A549 (cell line): ENCODE measurements at regions of chr19 and their contacts with region 1.

Region 1: GRCh38 chr19:53879140-53880081 is 2.6 kb upstream of the PRKCG start:
- DNase-seq: peak; percentile 92 to 93
- ATAC-seq: peak; percentile 64 to 78
- H3K4me3 ChIP-seq: peak overlapping the region; percentile 44
- H3K27ac ChIP-seq: peak overlapping the region; percentile 72 to 89
- H3K4me1 ChIP-seq: peaks cover 21% of the 10 kb centered on the region
- CTCF ChIP-seq: no peak
- EP300 ChIP-seq: no peak
- POLR2A ChIP-seq: no peak
- RAD21 ChIP-seq: no peak

Region 2: GRCh38 chr19:53849237-53849676 is 30.2 kb before region 1 on chr19:
- CTCF ChIA-PET with region 1: interaction called, 49 read pairs
- POLR2A ChIA-PET with region 1: no interaction called
- DNase-seq: no peak
- ATAC-seq: no peak
- H3K4me3 ChIP-seq: no peak overlapping the region
- H3K27ac ChIP-seq: no peak overlapping the region
- H3K4me1 ChIP-seq: peaks cover 8% of the 10 kb centered on the region; the same call in 2 of the 3 replicates
- CTCF ChIP-seq: no peak
- EP300 ChIP-seq: no peak
- POLR2A ChIP-seq: no peak
- RAD21 ChIP-seq: no peak

Region 3: GRCh38 chr19:53942001-53942786 is 62.8 kb after region 1 on chr19:
- CTCF ChIA-PET with region 1: no interaction called
- POLR2A ChIA-PET with region 1: no interaction called
- DNase-seq: peak in 1 of 2 experiments; percentile 71
- ATAC-seq: peak; percentile 27 to 57; a peak in 5 of 6 replicates
- H3K4me3 ChIP-seq: no peak overlapping the region
- H3K27ac ChIP-seq: no peak overlapping the region
- H3K4me1 ChIP-seq: 0 out of 3 replicates have a peak, but pooled peaks cover 8% of the 10 kb centered on the region
- CTCF ChIP-seq: no peak
- EP300 ChIP-seq: no peak
- POLR2A ChIP-seq: no peak
- RAD21 ChIP-seq: no peak

Region 4: DNA sequence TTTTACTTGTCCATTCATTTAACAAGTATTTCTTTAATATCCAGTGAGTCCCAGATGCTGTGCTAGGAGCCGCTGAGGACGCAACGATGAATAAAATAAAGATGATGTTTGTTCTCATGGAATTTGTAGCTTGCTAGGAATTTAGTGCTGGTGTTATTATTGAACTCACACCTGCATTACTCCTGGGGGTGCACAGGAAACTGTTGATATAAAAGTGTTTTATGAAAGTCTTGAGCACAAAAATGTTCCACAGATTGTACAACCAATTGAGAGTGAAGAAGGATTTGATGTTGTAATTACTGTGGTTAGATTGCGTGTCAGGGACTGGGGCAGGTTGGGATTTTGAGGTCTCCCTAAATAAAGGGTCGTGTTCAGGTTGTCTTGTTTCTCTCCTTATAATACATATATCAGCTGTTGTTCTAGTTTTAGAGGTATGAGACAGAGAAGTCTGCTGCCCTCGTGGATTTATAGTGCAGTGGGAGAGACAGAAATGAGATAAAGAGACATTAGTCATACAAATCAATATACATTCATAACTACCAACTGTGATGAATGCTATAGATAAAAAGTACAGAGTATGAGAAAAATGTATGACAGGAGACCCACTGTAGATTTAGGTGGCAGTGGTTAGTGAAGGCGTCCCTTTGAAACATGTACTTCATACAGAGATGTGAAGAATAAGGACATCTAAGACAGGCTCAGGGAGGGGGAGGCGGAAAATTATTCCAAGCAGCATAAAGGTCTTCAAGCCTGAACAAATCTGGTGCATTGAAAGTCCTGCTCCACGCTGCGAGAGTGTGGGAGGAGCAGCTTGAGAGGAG is 123.3 kb after region 1 on chr19:
- CTCF ChIA-PET with region 1: no interaction called
- POLR2A ChIA-PET with region 1: no interaction called
- DNase-seq: no peak
- ATAC-seq: peak in 1 of 2 experiments; percentile 6; a peak in 3 of 6 replicates
- H3K4me3 ChIP-seq: no peak overlapping the region
- H3K27ac ChIP-seq: peak overlapping the region; percentile 33 to 71; a peak in 5 of 6 replicates
- H3K4me1 ChIP-seq: peaks cover 43% of the 10 kb centered on the region
- CTCF ChIP-seq: no peak
- EP300 ChIP-seq: no peak
- POLR2A ChIP-seq: no peak
- RAD21 ChIP-seq: no peak